ENCODE measurements at regions of chr12 and their contacts with region 1.

Region 1: DNA sequence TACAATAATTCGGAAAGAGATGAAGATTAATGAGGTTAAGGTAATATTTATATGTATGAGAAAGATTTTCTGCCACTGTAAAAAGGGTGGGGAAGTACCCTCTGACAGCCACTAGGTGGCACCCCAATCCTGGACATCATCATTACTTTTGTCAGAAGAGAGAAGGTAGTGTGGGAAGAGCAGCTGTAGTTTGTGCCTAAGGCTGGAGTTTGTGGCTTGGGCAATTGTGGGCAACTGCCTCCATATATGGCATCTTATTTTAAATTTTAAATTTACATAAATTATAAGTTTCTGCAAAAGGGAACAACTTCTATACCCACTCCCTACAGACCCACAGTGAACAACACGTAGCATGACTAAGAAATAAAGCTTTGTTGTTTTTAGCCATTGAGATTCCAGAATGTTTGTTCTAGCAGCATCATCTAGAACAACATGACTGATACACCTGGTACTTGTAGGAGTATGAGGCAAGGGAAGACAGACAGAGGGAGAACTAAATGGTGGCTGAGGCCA is 34.4 kb upstream of the SYCP3 start:
- DNase-seq: peak; percentile 72
- H3K4me3 Mint-ChIP-seq: no peak overlapping the region
- H3K27ac Mint-ChIP-seq: no peak overlapping the region
- H3K4me1 Mint-ChIP-seq: peaks cover 6% of the 10 kb centered on the region
- H3K27me3 Mint-ChIP-seq: no peaks in the 10 kb centered on the region

Region 2: GRCh38 chr12:101414533-101415119 is 359.1 kb before region 1 on chr12:
- CTCF ChIA-PET with region 1: interaction called, 3 read pairs
- POLR2A ChIA-PET with region 1: no interaction called
- intact Hi-C with region 1: loop called (anchors 1 kb)
- DNase-seq: no peak
- H3K4me3 Mint-ChIP-seq: no peak overlapping the region
- H3K27ac Mint-ChIP-seq: no peak overlapping the region
- H3K4me1 Mint-ChIP-seq: no peaks in the 10 kb centered on the region
- H3K27me3 Mint-ChIP-seq: no peaks in the 10 kb centered on the region

Region 3: DNA sequence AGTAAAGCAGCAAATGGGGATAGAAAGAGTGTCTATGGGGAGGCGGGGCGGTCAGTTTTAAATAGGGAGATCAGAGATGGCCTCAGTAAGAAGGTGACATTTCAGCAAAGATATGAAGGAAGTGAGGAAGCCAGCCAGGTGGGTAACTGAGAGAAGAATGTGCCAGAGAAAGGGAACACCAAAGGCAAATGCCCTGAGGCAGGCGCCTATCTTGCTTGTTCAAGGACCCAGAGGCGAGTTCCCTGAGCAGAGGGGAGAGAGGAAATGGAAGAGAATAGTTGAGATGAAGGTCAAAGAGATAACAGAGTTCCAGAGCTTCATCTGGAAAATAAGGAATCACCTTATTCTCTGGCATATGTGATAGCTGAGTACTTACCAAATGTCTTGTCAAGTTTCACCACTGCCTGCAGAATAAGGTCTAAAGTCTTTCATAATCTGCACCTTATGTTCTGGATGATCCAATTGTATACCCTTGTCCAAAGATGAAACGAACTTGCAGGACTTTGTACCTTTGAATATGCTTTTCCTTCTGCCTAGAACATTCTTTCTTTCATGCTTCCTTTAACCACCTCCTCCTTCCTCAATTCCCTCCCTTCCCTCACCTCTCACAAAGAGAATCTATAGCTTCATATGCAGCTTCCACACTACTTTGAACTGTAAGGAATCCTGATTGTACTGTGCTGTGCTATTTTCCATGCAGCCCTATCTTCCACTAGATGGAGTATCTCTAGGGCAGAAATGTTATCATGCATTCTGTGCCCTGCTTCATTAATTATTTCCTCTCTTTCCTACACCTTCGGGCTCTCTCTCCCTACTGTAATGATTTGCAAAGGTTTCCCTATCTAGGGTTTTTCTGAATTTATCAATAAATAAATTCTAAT is 18.6 kb after region 1 on chr12:
- CTCF ChIA-PET with region 1: interaction called, 20 read pairs
- POLR2A ChIA-PET with region 1: no interaction called
- intact Hi-C with region 1: no loop called
- DNase-seq: no peak
- H3K4me3 Mint-ChIP-seq: no peak overlapping the region
- H3K27ac Mint-ChIP-seq: no peak overlapping the region
- H3K4me1 Mint-ChIP-seq: peaks cover 17% of the 10 kb centered on the region
- H3K27me3 Mint-ChIP-seq: no peaks in the 10 kb centered on the region

Region 4: GRCh38 chr12:101839324-101840283 is 65.9 kb after region 1 on chr12:
- CTCF ChIA-PET with region 1: interaction called, 141 read pairs
- POLR2A ChIA-PET with region 1: no interaction called
- intact Hi-C with region 1: loop called (anchors 1 kb)
- DNase-seq: peak; percentile 74
- H3K4me3 Mint-ChIP-seq: no peak overlapping the region
- H3K27ac Mint-ChIP-seq: no peak overlapping the region
- H3K4me1 Mint-ChIP-seq: peaks cover 10% of the 10 kb centered on the region
- H3K27me3 Mint-ChIP-seq: no peaks in the 10 kb centered on the region

Region 5: GRCh38 chr12:101919447-101919846 is 145.7 kb after region 1 on chr12:
- CTCF ChIA-PET with region 1: interaction called, 4 read pairs
- POLR2A ChIA-PET with region 1: no interaction called
- intact Hi-C with region 1: loop called (anchors 5 kb)
- DNase-seq: no peak
- H3K4me3 Mint-ChIP-seq: no peak overlapping the region
- H3K27ac Mint-ChIP-seq: no peak overlapping the region
- H3K4me1 Mint-ChIP-seq: peaks cover 6% of the 10 kb centered on the region
- H3K27me3 Mint-ChIP-seq: no peaks in the 10 kb centered on the region

Region 6: DNA sequence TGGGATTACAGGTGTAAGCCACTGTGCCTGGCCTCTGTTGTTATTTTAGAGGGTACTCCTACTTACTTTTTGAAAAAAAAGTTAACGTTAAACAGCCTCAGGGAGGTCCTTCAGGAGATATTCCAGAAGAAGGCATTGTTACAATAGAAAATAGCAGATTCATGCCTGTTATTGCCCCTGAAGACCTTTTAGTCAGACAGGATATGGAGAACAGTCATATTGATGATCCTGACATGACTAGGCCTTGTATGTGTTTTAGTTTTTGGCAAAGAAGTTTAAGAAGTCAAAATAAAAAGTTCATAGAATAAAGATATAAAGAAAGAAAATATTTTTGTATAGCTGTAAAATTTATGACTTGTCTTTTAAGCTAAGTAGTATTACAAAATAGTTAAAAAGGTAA is 242.8 kb after region 1 on chr12:
- CTCF ChIA-PET with region 1: no interaction called
- POLR2A ChIA-PET with region 1: no interaction called
- intact Hi-C with region 1: no loop called
- DNase-seq: no peak
- H3K4me3 Mint-ChIP-seq: no peak overlapping the region
- H3K27ac Mint-ChIP-seq: no peak overlapping the region
- H3K4me1 Mint-ChIP-seq: no peaks in the 10 kb centered on the region
- H3K27me3 Mint-ChIP-seq: no peaks in the 10 kb centered on the region

Measured in activated CD4-positive, alpha-beta memory T cell treated with anti-CD3 and anti-CD28 coated beads for 36 hours (primary cell).